AG04449 (cell line): ENCODE measurements at regions of chr11 and their contacts with region 1.

Region 1: DNA sequence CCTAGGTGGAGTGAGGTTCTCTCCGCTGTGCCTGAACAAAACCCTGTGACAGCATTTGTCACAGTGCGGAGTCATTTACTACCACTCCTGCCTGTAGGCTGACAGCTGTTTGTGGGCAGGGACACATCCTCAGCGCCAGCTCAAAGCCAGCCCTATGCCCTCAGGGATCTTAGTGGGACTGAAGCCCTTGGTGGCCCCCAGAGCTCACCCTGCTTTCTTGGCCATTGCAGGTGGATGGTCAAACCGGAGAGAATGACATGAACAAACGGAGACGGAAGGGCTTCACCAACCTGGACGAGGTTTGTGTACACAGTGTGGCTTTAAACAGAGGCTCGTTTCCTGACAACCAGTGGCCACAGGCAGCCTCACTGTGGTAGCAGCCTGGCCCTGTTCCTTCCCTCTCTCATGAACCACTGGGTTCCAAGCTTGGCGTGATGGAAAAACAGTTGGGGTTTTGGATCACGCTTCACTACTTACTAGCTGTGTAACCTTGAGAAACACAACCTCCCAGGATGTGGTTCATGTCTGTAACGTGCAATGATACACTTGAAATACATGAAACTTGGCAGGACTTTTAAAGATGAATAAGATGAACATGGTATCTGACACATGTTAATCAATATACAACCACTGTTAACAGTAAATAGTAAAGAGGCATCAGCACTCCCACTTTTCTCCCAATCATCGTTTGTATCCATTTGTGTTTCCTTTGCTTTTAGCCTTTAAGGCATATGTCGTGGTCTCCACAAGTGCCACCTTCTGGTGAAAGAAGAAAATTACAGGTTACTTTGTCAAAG is 125.8 kb downstream of the MICAL2 start:
- DNase-seq: no peak
- H3K4me3 ChIP-seq: no peak overlapping the region
- CTCF ChIP-seq: peak; percentile 46

Region 2: GRCh38 chr11:12052676-12053605 is 183.2 kb before region 1 on chr11:
- CTCF ChIA-PET with region 1: interaction called, 95 read pairs
- POLR2A ChIA-PET with region 1: interaction called, 4 read pairs
- DNase-seq: no peak
- H3K4me3 ChIP-seq: no peak overlapping the region
- CTCF ChIP-seq: peak; percentile 31

Region 3: DNA sequence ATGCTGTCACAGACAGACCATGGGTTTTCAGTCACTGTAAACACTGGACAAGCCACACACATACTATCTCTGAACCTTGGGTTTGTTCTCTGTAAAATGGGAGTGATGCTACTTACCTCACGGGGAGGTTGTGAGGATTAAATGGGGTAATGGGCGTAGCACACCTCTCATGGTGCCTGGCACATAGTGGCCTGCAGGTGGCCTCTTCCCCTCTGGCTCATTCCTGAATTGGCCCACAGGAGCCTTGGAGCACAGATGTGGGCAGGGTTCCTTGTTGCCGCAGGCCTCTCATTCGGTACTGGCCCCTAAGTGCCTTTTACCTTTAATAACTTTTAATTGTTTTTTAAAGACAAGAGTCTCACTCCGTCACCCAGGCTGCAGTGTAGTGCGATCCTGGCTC is 114.1 kb before region 1 on chr11:
- CTCF ChIA-PET with region 1: interaction called, 12 read pairs
- POLR2A ChIA-PET with region 1: no interaction called
- DNase-seq: no peak
- H3K4me3 ChIP-seq: no peak overlapping the region
- CTCF ChIP-seq: peak; percentile 44

Region 4: DNA sequence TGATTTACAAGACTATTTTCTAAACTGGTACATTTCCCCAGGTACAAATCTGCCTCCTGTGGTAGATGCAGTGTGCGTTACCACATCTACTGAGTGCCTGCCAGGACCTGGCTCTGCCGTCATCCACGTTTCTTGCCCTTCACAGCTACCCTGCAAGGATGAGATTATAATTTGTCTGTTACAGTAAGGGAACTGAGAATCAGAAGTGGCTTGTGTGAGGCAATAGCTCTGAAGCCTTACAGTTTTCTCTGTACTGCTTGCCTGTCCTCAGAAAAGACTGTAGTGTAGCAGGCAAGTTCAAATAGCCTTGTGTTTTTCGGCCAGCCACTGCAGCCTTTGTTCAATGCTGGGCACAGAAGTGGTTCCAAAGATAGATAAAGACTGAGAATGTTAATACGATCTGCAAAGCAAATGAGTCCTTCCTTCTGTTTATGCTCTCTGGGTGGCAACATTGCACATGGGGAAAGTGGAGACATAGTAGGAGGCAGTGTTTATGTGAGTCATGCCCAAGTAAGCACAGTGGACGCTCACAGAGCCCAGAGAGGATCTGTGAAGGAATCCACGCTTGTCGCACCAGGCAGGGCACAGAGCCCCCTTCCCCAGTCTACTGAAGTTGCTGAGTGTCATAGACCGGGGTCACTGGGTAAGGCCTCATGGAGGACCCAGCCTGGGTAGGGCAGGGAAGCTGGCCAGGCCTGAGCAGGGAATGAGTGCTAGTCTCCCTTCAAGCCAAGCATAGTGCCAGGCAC is 76.6 kb before region 1 on chr11:
- CTCF ChIA-PET with region 1: interaction called, 30 read pairs
- POLR2A ChIA-PET with region 1: interaction called, 3 read pairs
- DNase-seq: peak; percentile 81
- H3K4me3 ChIP-seq: no peak overlapping the region
- CTCF ChIP-seq: peak; percentile 21

Region 5: DNA sequence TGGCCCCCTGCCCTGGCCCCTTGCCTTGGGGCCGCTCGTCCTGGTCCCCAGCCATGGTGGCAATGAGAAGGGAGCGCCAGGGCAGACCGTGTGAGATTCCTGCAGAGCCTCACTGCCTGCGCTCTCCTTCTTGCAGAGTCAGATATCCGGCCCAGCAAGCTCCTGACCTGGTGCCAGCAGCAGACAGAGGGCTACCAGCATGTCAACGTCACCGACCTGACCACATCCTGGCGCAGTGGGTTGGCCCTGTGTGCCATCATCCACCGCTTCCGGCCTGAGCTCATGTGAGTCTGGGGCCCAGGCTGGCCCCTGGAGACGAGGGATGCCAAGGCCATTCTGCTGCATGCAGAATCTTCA is 11.6 kb before region 1 on chr11:
- CTCF ChIA-PET with region 1: interaction called, 28 read pairs
- POLR2A ChIA-PET with region 1: no interaction called
- DNase-seq: no peak
- H3K4me3 ChIP-seq: no peak overlapping the region
- CTCF ChIP-seq: no peak

Region 6: GRCh38 chr11:12294613-12295012 is 58.5 kb after region 1 on chr11:
- CTCF ChIA-PET with region 1: no interaction called
- POLR2A ChIA-PET with region 1: no interaction called
- DNase-seq: no peak
- H3K4me3 ChIP-seq: no peak overlapping the region
- CTCF ChIP-seq: no peak